ENCODE measurements at regions of chr9 and their contacts with region 1.

Region 1: DNA sequence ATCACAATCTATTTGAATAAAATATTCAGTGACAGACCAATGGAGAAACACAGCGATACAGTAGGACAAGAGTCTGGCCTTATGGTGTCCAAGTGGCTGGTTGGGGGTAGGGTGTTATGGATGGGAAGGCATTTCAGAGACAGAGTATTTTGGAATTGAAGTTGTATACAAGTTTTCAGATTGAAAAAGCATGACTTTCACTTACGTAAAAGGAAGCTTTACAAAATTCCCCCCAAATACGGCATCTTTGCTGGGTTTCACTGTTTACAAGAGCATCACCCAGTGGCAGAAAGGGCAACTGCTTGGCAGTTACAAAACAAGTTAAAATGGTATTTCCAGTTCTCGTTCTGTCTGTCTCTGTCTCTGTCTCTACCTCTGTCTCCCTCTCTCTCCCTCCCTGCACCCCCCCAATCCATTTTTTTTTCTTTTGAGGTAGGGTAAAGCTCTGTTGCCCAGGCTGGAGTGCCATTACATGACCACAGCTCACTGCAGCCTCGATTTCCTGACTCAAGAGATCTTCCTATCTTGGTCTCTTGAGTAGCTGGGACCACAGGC is 86.2 kb downstream of the PTPN3 start:
- DNase-seq: no peak
- H3K4me3 ChIP-seq: no peak overlapping the region
- H3K27ac ChIP-seq: no peak overlapping the region
- H3K4me1 ChIP-seq: peaks cover 5 to 15% (median 12%) of the 10 kb centered on the region in 4 experiments; a peak in 5 of 7 replicates
- H3K27me3 ChIP-seq: no peaks in the 10 kb centered on the region
- CTCF ChIP-seq: peak in 2 of 3 experiments; percentile 79 to 89; a peak in 3 of 4 replicates
- EP300 ChIP-seq: no peak
- POLR2A ChIP-seq: no peak
- RAD21 ChIP-seq: peak; percentile 63 to 79

Region 2: DNA sequence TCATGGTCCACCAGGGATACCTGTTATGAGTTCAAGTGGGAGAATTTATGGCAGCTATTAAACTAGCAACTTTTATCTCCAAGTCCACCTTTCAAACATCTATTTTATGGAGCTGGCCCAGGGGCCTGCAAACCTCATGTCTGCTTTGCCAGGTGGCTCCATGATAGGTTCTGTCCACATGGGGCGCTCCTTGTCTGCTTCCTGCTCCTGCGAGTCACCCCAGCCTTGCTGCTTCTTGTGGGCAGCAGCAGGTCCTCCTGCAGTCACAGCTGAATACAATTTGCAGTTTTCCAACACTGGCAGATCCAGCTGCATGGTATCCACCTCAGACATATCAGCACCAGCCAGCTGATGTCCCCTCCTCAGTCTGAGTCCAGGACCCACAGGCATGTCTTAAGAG is 205.2 kb before region 1 on chr9:
- CTCF ChIA-PET with region 1: interaction called, 13 read pairs
- POLR2A ChIA-PET with region 1: no interaction called
- DNase-seq: peak in 1 of 2 experiments; percentile 17
- H3K4me3 ChIP-seq: no peak overlapping the region
- H3K27ac ChIP-seq: no peak overlapping the region
- H3K4me1 ChIP-seq: no peaks in the 10 kb centered on the region
- H3K27me3 ChIP-seq: no peaks in the 10 kb centered on the region
- CTCF ChIP-seq: peak; percentile 40 to 54 (median 45)
- EP300 ChIP-seq: no peak
- POLR2A ChIP-seq: no peak
- RAD21 ChIP-seq: peak; percentile 42 to 50; a peak in 2 of 4 replicates

Region 3: GRCh38 chr9:109320742-109321448 is 91.0 kb before region 1 on chr9 and contains the start of gene EPB41L4B:
- CTCF ChIA-PET with region 1: interaction called, 12 read pairs
- POLR2A ChIA-PET with region 1: interaction called, 3 read pairs
- DNase-seq: peak; percentile 89 to 97
- H3K4me3 ChIP-seq: peak within 1 kb of the TSS; percentile 78 to 87 (median 81)
- H3K27ac ChIP-seq: no peak within 1 kb of the TSS
- H3K4me1 ChIP-seq: peaks cover 13 to 19% (median 14%) of the 10 kb centered on the region in 4 experiments
- H3K27me3 ChIP-seq: peaks cover 0 to 8% (median 0%) of the 10 kb centered on the region in 4 experiments; a peak in 2 of 7 replicates
- CTCF ChIP-seq: peak; percentile 87 to 98 (median 91)
- EP300 ChIP-seq: peak in 1 of 2 experiments; percentile 90; a peak in 2 of 3 replicates
- POLR2A ChIP-seq: no peak
- RAD21 ChIP-seq: peak; percentile 86 to 93
- total RNA-seq, gene EPB41L4B: 23.7 and 25.0 TPM in 2 replicates

Region 4: GRCh38 chr9:109401168-109401989 is 10.5 kb before region 1 on chr9:
- CTCF ChIA-PET with region 1: interaction called, 80 read pairs
- POLR2A ChIA-PET with region 1: interaction called, 5 read pairs
- DNase-seq: peak; percentile 58 to 87
- H3K4me3 ChIP-seq: no peak overlapping the region; a peak in 1 of 8 replicates
- H3K27ac ChIP-seq: no peak overlapping the region
- H3K4me1 ChIP-seq: peaks cover 0 to 5% (median 1%) of the 10 kb centered on the region in 4 experiments; a peak in 1 of 7 replicates
- H3K27me3 ChIP-seq: no peaks in the 10 kb centered on the region
- CTCF ChIP-seq: peak; percentile 90 to 99 (median 99)
- EP300 ChIP-seq: no peak
- POLR2A ChIP-seq: no peak
- RAD21 ChIP-seq: peak; percentile 88 to 92

Region 5: GRCh38 chr9:109440797-109441287 is 29.0 kb after region 1 on chr9:
- CTCF ChIA-PET with region 1: interaction called, 30 read pairs
- POLR2A ChIA-PET with region 1: no interaction called
- DNase-seq: peak in 1 of 2 experiments; percentile 63
- H3K4me3 ChIP-seq: no peak overlapping the region
- H3K27ac ChIP-seq: no peak overlapping the region
- H3K4me1 ChIP-seq: peaks cover 0 to 6% (median 0%) of the 10 kb centered on the region in 4 experiments; a peak in 1 of 7 replicates
- H3K27me3 ChIP-seq: no peaks in the 10 kb centered on the region
- CTCF ChIP-seq: peak in 2 of 3 experiments; percentile 75 to 88; a peak in 3 of 4 replicates
- EP300 ChIP-seq: no peak
- POLR2A ChIP-seq: peak; percentile 45 to 60; a peak in 2 of 3 replicates
- RAD21 ChIP-seq: peak; percentile 58 to 66

Region 6: GRCh38 chr9:109469646-109470358 is 57.9 kb after region 1 on chr9:
- CTCF ChIA-PET with region 1: interaction called, 22 read pairs
- POLR2A ChIA-PET with region 1: no interaction called
- DNase-seq: peak; percentile 44 to 76
- H3K4me3 ChIP-seq: no peak overlapping the region
- H3K27ac ChIP-seq: no peak overlapping the region
- H3K4me1 ChIP-seq: no peaks in the 10 kb centered on the region
- H3K27me3 ChIP-seq: no peaks in the 10 kb centered on the region
- CTCF ChIP-seq: peak; percentile 84 to 95 (median 93)
- EP300 ChIP-seq: no peak
- POLR2A ChIP-seq: no peak
- RAD21 ChIP-seq: peak; percentile 89 to 90

Measured in H1 (cell line).